Transverse colon (tissue), 4 donors: ENCODE measurements at regions of chr10 and their contacts with region 1.

Region 1: DNA sequence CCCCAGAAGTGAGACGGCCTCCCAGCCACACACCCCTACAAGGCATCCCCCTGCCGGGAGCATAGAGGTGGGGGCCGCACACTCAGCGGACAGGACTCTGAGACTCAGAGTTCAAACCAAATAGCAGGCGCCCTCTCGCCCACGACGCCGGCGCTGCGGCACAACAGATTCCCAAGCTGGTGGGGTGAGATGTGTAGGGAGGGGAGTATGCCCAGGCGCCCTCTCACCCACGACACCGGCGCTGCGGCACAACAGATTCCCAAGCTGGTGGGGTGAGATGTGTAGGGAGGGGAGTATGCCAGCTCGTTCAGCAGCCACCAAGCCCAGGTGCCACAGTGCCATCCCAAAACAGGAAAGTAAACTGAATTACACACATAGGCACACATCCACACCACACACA is 64.7 kb downstream of the TCERG1L start:
- DNase-seq: no peak
- H3K4me3 ChIP-seq: no peak overlapping the region
- H3K27ac ChIP-seq: no peak overlapping the region
- H3K4me1 ChIP-seq: no peaks in the 10 kb centered on the region
- H3K27me3 ChIP-seq: no peaks in the 10 kb centered on the region
- CTCF ChIP-seq: no peak
- EP300 ChIP-seq: no peak
- POLR2A ChIP-seq: no peak

Region 2: DNA sequence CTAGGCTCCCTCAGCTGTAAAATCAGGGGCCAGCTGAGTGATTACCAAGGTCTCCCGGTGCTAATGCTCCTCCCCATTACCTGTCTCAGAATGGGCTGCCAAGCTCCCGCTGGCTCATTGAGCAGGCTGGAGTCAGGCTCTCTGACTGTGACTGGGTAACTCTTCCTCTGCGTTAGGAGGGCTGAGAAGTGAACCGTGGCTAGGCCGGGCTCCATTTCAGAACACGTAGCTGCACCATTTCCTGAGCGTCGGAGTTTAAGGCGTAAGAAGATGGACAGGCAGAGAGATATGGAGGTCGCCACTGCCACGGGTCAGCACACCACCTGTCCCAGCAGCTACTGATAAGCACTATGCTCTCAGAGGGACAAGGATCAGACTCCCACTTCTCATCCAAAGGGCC is 185.6 kb before region 1 on chr10:
- in situ Hi-C with region 1: no loop called
- intact Hi-C with region 1: no loop called
- DNase-seq: no peak
- H3K4me3 ChIP-seq: no peak overlapping the region
- H3K27ac ChIP-seq: no peak overlapping the region
- H3K4me1 ChIP-seq: no peaks in the 10 kb centered on the region
- H3K27me3 ChIP-seq: no peaks in the 10 kb centered on the region
- CTCF ChIP-seq: no peak
- EP300 ChIP-seq: no peak
- POLR2A ChIP-seq: no peak

Region 3: DNA sequence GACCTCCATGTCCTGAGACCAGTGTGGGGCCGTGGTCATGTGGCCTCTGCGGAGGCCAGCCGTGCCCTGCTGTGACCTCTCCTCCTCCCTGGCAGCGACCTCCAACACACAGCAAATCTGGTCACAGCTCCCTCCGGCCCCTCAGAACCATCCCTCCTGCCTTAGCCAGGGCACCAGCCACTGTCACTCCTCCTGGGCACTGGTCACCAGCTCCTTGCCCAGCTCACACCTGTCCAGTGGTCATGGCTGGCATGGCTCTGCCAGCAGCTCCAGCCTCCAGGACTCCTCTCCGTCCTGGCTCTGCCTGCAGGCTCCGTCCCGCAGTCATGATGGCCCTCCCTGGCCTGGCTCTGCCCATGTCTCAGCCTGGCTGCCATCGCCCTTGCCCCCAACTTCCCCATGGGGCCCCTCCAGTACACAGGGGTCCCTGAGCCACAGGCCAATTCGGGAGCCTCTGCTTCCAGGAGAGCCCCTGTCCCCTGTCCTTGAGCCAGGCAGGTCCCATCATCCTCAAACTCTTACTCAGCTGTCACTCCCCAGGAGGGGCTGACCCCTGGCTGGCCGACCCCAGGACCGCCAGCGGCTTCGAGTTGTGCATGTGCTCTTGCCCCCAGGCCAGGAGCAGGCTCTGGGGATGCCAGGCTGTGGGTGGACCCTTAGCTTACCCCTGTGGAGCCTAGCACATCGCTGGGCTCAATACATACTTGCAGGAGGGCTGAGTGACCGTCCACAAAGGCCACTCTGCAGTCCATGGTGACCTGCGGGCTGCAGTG is 27.8 kb before region 1 on chr10:
- in situ Hi-C with region 1: no loop called
- intact Hi-C with region 1: loop called (anchors 1 kb)
- DNase-seq: no peak
- H3K4me3 ChIP-seq: no peak overlapping the region
- H3K27ac ChIP-seq: no peak overlapping the region
- H3K4me1 ChIP-seq: no peaks in the 10 kb centered on the region
- H3K27me3 ChIP-seq: no peaks in the 10 kb centered on the region
- CTCF ChIP-seq: no peak
- EP300 ChIP-seq: no peak
- POLR2A ChIP-seq: no peak